Dorsolateral prefrontal cortex (tissue), 120 donors: ENCODE measurements at regions of chr6 and their contacts with region 1.

Region 1: GRCh38 chr6:16901782-16902181 is 140.5 kb upstream of the ATXN1 start:
- DNase-seq: peak; percentile 7 to 62 (median 51)
- H3K4me3 ChIP-seq: no peak overlapping the region
- H3K27ac ChIP-seq: peak overlapping the region in 6 of 59 donors; percentile 4 to 44 (median 23)
- H3K27me3 ChIP-seq: no peaks in the 10 kb centered on the region
- CTCF ChIP-seq: no peak

Region 2: DNA sequence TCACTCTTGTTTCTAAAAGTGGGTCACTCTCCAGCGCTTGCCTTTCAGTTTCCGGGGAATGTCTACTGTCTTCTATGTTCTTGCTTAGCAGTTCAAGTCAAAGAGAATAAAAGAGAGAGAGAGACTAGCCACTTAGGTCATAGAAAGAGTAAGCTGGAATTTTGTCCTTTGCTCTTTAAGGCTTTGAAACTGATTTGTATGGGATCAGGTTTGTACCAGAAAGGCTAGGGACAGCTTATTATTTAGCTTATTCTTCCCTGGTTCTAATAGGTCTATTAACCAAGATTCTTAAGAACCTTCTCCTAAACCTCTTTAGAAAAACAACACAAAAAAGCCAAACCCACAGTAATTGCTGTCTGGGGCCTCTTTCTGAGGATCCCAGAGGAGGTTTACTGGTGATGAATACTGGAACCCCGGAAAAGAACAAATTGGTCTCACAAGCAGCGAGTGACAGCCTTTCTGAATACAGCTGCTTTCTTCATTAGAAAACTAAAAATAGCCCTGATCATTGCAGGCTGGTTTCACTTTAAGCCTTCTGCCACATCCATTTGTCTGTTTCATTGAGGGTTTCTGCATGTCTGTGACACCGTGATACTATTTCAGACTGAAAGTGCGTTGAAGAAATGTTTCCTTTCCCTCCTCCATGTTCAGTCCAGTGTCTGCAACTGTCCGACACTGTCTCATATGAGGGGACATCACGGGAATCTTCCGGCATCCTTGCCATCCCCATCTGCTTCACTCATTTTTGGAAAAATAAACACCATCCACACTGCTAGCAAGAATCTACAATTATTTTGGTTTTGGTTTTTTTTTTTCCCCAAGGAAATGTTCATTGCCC is 65.4 kb before region 1 on chr6:
- intact Hi-C with region 1: loop called in 1 of 2 experiments (anchors 5 kb)
- DNase-seq: no peak
- H3K4me3 ChIP-seq: peak overlapping the region in 57 of 59 donors; percentile 1 to 60 (median 40)
- H3K27ac ChIP-seq: peak overlapping the region in 53 of 59 donors; percentile 1 to 83 (median 62)
- H3K27me3 ChIP-seq: no peaks in the 10 kb centered on the region
- CTCF ChIP-seq: no peak